ENCODE measurements at regions of chr15 and their contacts with region 1.

Region 1: GRCh38 chr15:89243691-89244471 is at the start of gene FANCI:
- DNase-seq: peak; percentile 94
- ATAC-seq: peak; percentile 97
- H3K4me3 Mint-ChIP-seq: peak within 1 kb of the TSS; percentile 90
- H3K27ac Mint-ChIP-seq: peak within 1 kb of the TSS; percentile 75
- H3K4me1 Mint-ChIP-seq: peaks cover 29% of the 10 kb centered on the region
- H3K27me3 Mint-ChIP-seq: no peaks in the 10 kb centered on the region
- CTCF ChIP-seq: no peak
- total RNA-seq, gene FANCI: 13.8 and 16.6 TPM in 2 replicates

Region 2: DNA sequence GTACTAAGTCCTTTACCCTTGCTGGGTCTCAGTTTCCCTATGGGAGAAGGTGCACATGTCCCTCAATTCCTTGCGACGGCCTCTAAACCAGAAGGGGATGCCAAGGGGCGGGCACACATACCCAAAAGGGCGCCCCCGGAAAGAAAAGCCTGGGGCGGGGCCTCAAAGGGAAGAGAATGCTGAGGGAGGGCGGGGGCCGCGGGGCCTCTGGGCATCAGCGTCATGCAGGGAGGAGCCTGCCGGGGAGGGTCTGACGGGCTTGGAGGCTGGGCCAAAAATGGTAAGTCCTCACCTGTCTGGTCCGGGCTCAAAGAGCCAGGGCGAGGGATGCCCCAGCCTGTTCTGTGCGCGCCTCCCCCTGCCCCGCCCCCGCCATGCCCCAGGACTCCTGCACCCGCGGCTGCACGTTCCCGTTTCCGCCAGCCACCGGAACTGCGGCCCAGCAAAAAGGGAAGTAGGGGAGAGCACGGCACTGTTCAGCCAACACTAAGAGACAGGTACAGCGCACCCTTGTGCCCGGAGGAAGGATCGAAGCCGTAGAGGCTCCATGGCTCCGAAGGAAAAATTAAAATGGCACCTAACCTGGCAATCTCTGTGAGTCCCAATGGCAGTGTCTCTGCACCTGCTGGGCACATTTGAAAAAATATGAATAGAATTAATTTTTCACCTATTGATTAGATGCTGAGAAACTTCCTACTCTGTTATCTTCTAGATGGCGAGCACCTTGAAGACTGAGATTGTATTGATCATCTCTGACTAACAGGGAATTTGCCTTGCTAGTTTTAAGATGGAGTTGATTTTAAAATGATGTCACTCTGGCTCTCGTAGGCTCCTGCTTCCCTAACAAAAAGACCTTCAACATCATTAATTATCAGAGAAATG is 697.4 kb before region 1 on chr15 and contains the start of gene DET1:
- CTCF ChIA-PET with region 1: no interaction called
- POLR2A ChIA-PET with region 1: no interaction called
- intact Hi-C with region 1: loop called (anchors 10 kb)
- DNase-seq: peak; percentile 88
- ATAC-seq: peak; percentile 94
- H3K4me3 Mint-ChIP-seq: peak within 1 kb of the TSS; percentile 92
- H3K27ac Mint-ChIP-seq: peak within 1 kb of the TSS; percentile 94
- H3K4me1 Mint-ChIP-seq: peaks cover 14% of the 10 kb centered on the region
- H3K27me3 Mint-ChIP-seq: no peaks in the 10 kb centered on the region
- CTCF ChIP-seq: no peak
- total RNA-seq, gene DET1: 5.7 and 7.1 TPM in 2 replicates

Measured in activated B cell treated with CpG ODN at 0.5 μM for 24 hours (primary cell).